ENCODE measurements at regions of chr17 and their contacts with region 1.

Region 1: GRCh38 chr17:45135192-45135977 is at the start of gene ACBD4:
- DNase-seq: peak; percentile 81 to 98
- H3K4me3 ChIP-seq: peak within 1 kb of the TSS; percentile 62 to 81
- H3K27ac ChIP-seq: peak within 1 kb of the TSS; percentile 86 to 90
- H3K4me1 ChIP-seq: peaks cover 5 to 19% of the 10 kb centered on the region in 2 donors
- H3K27me3 ChIP-seq: no peaks in the 10 kb centered on the region
- CTCF ChIP-seq: peak; percentile 99 to 100 (median 99)
- total RNA-seq, gene ACBD4: 14.7 TPM

Region 2: DNA sequence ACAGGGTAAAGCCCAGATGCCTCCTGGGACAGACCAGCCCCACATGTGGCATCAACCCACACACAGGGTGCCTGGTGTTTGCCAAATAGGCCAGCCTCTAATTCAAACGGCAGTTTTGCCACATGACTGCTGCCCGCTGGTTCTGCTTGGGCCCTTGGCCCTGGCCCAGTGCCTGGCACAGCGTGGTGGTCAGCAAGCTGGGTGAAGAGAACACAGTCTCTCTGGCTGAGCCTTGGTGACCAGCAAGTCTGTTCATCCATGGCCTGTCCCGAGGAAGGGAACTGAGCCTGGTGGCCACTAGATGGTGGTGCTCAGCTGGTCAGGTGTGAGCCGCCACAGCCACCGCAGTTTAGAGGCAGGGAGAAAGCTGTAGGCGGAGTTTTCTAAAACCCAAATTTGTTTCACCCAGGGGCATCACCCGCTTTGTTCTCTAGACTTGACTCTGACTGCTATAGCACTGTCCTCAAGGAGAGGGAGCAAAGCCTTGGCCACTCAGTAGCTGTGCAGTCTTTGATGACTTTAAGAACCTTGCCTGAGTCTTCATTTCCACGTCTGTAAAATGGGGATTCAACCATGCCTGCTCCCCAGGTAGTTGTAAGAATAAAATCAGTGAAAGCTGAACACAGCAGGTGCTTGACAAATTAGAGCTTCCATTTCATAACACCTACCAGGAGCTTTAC is 215.4 kb before region 1 on chr17:
- intact Hi-C with region 1: loop called (anchors 2 kb)
- DNase-seq: peak; percentile 54 to 90
- H3K4me3 ChIP-seq: no peak overlapping the region
- H3K27ac ChIP-seq: peak overlapping the region in 1 of 2 donors; percentile 30
- H3K4me1 ChIP-seq: peaks cover 12 to 24% of the 10 kb centered on the region in 2 donors
- H3K27me3 ChIP-seq: no peaks in the 10 kb centered on the region
- CTCF ChIP-seq: peak; percentile 82 to 90 (median 89)

Region 3: DNA sequence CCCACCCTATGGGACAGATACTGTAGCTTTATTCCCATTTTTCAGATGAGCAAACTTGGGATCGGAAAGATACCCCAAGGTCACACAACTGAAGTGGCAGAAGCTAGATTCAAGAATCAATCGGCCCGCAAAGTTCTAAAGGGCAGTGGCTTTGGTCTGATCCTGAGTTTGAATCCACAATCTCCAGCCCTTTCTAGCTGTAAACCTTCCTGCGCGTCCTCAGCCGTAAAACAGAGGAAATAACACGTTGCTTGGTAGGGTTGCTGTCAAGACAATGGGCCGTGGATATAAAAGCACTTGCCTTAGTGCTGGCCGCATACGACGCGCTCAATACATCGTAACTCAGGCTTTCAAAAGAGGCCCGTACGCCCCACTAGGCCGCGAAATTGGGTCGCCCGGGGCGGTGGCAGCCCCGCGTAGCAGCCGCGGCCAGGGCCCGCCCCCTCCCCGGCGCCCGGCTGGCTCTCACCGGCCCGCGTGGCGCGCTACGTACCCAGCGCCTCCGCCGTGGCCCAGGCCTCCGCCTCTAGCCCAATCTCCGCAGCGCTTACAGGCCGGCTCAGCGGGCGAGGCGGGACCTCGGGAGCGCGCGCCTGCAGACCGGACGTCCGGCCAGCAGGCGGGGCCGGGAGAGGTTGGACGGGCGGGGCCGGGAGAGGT is 84.2 kb before region 1 on chr17 and contains the start of gene DCAKD:
- intact Hi-C with region 1: loop called (anchors 2 kb)
- DNase-seq: peak; percentile 82 to 98
- H3K4me3 ChIP-seq: peak within 1 kb of the TSS; percentile 61 to 67
- H3K27ac ChIP-seq: peak within 1 kb of the TSS; percentile 92 to 94
- H3K4me1 ChIP-seq: peaks cover 8 to 17% of the 10 kb centered on the region in 2 donors
- H3K27me3 ChIP-seq: no peaks in the 10 kb centered on the region
- CTCF ChIP-seq: peak in 1 of 3 experiments; percentile 17
- total RNA-seq, gene DCAKD: 5.0 TPM

Region 4: DNA sequence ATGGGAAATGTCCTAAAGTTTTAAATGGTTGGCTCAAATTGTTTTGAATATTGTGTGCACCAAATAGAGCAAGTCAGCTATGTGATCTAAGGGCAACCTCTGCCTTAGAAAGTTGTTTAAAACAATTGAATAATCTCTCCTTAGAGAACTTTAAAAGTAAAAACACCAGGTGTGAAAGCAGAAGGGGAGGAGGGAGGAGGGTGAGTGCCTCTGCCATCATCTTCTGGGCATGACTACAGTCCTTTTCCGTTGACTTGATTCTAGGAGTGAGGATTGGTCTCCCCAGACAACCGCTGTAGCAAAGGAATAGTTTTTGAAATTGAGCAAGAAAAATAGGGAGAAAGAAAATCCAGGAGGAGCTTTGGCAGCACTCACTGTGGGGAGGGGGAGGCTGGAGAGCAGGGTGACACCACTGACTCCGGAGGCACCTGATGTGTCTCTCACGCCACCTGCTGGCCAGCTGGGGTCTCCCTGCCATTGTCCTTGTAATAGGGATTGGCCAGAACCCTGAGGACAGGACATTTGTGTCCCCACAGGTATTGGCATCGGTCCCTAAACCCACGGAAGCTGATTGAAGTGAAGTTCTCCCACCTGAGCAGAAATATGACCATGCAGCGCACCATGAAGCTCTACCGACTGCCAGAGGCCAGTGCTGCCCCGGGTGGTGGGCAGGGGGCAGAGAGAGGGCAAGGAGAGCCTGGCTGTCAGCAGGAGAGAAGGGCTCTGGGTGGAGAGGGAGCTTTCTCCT is 36.3 kb before region 1 on chr17:
- intact Hi-C with region 1: loop called (anchors 2 kb)
- DNase-seq: peak; percentile 63 to 97
- H3K4me3 ChIP-seq: peak overlapping the region in 1 of 2 donors; percentile 9
- H3K27ac ChIP-seq: peak overlapping the region; percentile 64 to 80
- H3K4me1 ChIP-seq: peaks cover 16 to 45% of the 10 kb centered on the region in 2 donors
- H3K27me3 ChIP-seq: no peaks in the 10 kb centered on the region
- CTCF ChIP-seq: peak; percentile 85 to 96 (median 91)

Region 5: GRCh38 chr17:45161019-45161825 is 25.8 kb after region 1 on chr17:
- intact Hi-C with region 1: loop called (anchors 1 kb)
- DNase-seq: peak; percentile 98 to 100
- H3K4me3 ChIP-seq: peak overlapping the region; percentile 81 to 90
- H3K27ac ChIP-seq: peak overlapping the region; percentile 98 to 100
- H3K4me1 ChIP-seq: peaks cover 12 to 42% of the 10 kb centered on the region in 2 donors
- H3K27me3 ChIP-seq: no peaks in the 10 kb centered on the region
- CTCF ChIP-seq: peak in 1 of 3 experiments; percentile 34

Region 6: DNA sequence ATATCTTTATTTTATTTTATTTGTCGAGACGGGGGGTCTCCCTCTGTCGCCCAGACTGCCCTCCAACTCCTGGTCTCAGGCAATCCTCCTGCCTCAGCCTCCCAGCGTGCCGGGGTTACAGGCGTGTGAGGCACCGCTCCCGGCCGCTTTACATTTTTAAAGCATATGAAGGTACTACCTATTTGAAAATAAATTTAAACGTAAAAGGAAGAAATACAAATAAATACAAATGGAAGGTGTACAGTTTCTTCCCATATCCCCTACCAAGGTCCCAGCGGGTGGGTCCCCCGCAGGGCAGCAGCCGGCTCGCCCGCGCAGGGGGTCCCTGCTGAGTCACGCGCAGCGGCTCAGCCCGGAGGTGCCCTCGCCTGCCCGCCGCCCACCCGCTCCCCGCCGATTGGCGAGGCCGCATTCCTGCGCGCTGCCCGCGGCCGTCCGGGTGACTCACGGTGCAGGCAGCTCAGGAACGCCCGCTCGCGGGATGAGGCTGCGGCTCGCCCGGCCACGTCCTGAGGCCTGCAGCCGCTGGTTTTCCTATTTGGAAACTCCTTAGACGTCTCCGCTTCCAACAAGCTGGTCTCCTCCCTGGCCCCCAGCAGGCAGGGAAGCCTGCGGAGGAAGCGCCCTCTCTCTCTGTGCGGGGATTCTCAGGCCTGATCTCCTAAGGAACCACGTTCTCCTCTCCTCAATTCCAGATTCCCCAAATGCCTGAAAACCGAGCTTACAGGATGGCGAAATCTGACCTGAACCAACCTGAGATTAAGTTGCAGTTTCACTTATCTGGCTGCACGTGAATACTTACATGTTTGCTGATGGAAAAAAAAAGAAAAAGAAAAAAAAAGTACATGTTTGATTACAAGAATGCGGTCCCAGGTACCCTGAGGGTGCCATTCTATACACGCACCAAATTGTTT is 236.3 kb after region 1 on chr17:
- intact Hi-C with region 1: loop called (anchors 5 kb)
- DNase-seq: peak in 1 of 2 donors; percentile 93
- H3K4me3 ChIP-seq: peak overlapping the region; percentile 46 to 50
- H3K27ac ChIP-seq: peak overlapping the region; percentile 64 to 73
- H3K4me1 ChIP-seq: peaks cover 5 to 24% of the 10 kb centered on the region in 2 donors
- H3K27me3 ChIP-seq: no peaks in the 10 kb centered on the region
- CTCF ChIP-seq: no peak

Measured in ascending aorta (tissue), 2 donors.